Heart right ventricle (tissue), 16 donors: ENCODE measurements at regions of chr12 and their contacts with region 1.

Region 1: GRCh38 chr12:19031032-19031431 is 98.5 kb upstream of the PLEKHA5 start:
- DNase-seq: no peak
- ATAC-seq: peak in 5 of 8 donors; percentile 30 to 59 (median 50)
- H3K4me3 ChIP-seq: no peak overlapping the region
- H3K27ac ChIP-seq: no peak overlapping the region
- H3K4me1 ChIP-seq: peaks cover 0 to 14% (median 4%) of the 10 kb centered on the region in 9 donors
- H3K27me3 ChIP-seq: no peaks in the 10 kb centered on the region
- CTCF ChIP-seq: no peak

Region 2: GRCh38 chr12:18882690-18883089 is 148.3 kb before region 1 on chr12:
- intact Hi-C with region 1: loop called in 2 of 10 experiments (anchors 5 to 10 kb)
- DNase-seq: no peak
- ATAC-seq: peak in 2 of 8 donors; percentile 41 to 56
- H3K4me3 ChIP-seq: peak overlapping the region in 1 of 10 donors; percentile 14
- H3K27ac ChIP-seq: no peak overlapping the region
- H3K4me1 ChIP-seq: no peaks in the 10 kb centered on the region
- H3K27me3 ChIP-seq: no peaks in the 10 kb centered on the region
- CTCF ChIP-seq: peak in 4 of 9 donors; percentile 23 to 34 (median 31)

Region 3: DNA sequence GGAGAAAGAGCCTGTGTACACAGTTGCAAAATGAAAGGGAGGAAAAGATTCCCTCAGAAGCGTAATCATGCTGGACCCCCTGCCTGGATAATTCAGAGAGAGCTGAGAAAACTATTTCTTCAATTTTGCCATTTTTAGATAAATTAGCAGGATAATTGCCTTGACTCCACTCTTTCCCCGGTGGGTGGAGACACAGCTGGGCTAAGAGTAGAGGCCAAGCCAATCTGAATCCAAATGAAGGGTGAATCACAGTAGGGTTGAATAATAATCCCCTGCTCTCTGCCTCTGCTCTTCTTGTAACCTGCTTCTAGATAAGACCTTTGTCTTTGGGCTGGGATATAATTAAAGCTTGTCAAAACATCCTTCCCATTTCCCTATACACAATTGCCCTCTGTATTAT is 143.0 kb before region 1 on chr12:
- intact Hi-C with region 1: loop called in 2 of 10 experiments (anchors 5 to 10 kb)
- DNase-seq: no peak
- ATAC-seq: peak in 6 of 8 donors; percentile 63 to 86 (median 77)
- H3K4me3 ChIP-seq: no peak overlapping the region
- H3K27ac ChIP-seq: peak overlapping the region in 1 of 10 donors; percentile 31
- H3K4me1 ChIP-seq: no peaks in the 10 kb centered on the region
- H3K27me3 ChIP-seq: no peaks in the 10 kb centered on the region
- CTCF ChIP-seq: no peak

Region 4: DNA sequence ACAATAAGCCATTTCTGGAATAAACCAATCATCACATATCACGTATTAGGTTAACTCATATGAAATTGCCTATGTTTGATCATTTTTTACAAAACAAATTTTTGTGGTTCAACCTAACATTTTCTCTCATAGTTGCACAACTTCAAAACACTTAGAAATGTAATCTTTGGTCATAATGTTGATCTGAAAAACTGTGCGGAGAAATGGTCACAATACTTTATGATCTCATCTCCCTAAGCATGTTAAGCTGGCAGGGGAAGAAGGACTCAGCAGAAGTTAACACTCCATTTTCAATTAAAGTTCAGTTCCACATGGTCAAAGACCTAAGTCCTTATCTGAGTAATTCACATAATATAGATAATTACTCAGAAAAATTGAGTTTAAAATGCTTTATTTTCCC is 98.3 kb before region 1 on chr12:
- intact Hi-C with region 1: no loop called
- DNase-seq: no peak
- ATAC-seq: no peak
- H3K4me3 ChIP-seq: no peak overlapping the region
- H3K27ac ChIP-seq: no peak overlapping the region
- H3K4me1 ChIP-seq: no peaks in the 10 kb centered on the region
- H3K27me3 ChIP-seq: no peaks in the 10 kb centered on the region
- CTCF ChIP-seq: no peak

Region 5: DNA sequence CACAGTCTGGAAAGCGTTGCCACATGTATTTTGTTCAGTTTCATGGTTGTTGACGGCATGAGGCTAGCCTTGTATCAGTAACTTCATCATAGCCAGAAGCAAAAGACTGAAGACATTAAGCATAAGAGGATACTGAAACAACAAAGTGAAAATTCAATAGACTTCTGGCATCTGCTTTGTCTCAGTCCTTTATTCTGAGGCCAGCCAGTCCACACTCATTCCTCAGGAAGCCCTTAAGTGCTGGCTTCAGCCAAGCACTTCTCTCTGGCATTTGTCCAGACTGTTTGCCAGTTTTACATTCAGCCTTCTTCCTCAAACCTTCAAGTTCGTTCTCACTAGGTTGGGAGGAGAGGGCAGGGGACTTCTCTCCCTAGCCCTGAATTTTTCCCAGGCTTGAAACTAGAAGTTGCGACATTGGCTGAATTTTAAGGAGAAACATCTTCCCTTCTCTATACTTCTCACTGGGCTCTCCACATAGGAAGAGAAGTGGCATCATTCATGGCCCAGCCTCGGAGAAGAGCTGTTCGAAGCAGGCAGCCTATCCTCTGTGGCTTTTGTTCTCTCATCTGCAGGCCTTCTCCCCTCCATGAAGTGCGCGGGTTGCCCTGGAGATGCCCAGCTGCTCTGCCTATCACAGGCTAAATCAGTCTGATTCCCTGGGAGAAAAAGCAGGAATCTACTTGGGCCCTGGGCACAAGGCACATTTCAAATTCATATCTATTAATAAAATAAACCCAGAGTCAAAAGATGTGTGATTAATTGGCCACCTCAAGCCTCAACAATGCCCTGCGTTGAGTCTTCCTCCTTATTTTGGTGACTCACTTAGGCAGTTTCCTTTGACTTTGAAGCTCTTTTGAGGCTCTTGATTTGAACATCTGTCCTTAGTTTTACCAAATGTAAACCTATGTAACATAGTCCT is 32.4 kb before region 1 on chr12:
- intact Hi-C with region 1: no loop called
- DNase-seq: no peak
- ATAC-seq: peak in 1 of 8 donors; percentile 29
- H3K4me3 ChIP-seq: no peak overlapping the region
- H3K27ac ChIP-seq: no peak overlapping the region
- H3K4me1 ChIP-seq: no peaks in the 10 kb centered on the region
- H3K27me3 ChIP-seq: no peaks in the 10 kb centered on the region
- CTCF ChIP-seq: no peak

Region 6: DNA sequence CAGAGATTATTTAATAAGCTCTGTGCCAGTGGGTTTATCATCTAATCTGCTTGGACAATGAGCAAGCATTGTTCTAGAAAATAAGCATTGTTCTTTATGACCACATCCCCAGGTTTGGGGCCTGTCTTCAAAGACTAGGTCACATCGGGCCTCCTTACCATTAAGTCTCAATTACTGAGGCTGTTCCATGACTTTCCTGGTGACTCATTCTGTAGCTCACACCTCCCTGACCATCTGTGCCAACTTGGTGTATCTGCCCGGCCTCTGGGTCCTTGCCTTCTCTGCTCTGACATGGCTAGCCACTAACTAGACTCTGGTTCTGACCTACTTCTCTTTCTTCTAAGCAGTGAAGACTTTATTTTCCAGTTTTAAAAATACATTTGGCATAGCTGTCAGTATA is 54.1 kb after region 1 on chr12:
- intact Hi-C with region 1: no loop called
- DNase-seq: no peak
- ATAC-seq: no peak
- H3K4me3 ChIP-seq: no peak overlapping the region
- H3K27ac ChIP-seq: no peak overlapping the region
- H3K4me1 ChIP-seq: no peaks in the 10 kb centered on the region
- H3K27me3 ChIP-seq: no peaks in the 10 kb centered on the region
- CTCF ChIP-seq: no peak

Region 7: DNA sequence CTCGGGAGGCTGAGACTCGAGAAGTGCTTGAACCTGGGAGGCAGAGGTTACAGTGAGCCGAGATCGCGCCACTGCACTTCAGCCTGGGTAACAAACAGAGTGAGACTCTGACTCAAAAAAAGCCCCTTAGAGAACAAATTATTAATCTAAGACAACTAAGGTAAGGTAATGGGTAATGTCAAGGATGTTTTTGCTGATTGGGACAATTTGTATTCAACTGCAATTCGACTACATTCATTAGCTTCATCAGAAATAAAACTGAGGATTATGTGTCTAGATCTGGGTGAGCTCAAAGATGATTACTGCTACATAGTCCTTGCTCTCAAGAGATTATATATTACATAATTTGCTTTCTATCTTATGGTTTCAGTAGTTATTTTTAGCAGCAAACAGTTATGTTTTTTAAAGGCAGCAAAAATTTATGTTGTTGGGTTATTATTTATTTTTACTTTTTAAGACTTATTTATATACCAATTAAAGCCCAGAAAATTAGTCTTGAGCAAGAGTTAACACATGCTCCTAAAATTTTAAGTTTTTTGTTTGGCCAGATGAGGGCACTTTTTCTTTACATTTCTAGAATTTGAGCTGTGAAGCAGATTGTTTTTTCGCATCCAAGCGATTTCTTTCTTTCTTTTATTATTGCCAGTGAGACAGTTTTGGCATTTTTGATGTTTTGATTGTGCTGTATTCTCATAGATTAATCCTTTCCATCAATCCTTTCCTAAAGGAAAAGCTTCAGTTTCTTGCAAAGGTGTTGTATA is 150.8 kb after region 1 on chr12:
- intact Hi-C with region 1: loop called in 3 of 10 experiments (anchors 5 to 10 kb)
- DNase-seq: no peak
- ATAC-seq: no peak
- H3K4me3 ChIP-seq: no peak overlapping the region
- H3K27ac ChIP-seq: peak overlapping the region in 6 of 10 donors; percentile 4 to 57 (median 34)
- H3K4me1 ChIP-seq: peaks cover 2 to 64% (median 28%) of the 10 kb centered on the region in 9 donors
- H3K27me3 ChIP-seq: no peaks in the 10 kb centered on the region
- CTCF ChIP-seq: peak in 5 of 9 donors; percentile 13 to 34 (median 25)